ENCODE measurements at regions of chr9 and their contacts with region 1.

Region 1: DNA sequence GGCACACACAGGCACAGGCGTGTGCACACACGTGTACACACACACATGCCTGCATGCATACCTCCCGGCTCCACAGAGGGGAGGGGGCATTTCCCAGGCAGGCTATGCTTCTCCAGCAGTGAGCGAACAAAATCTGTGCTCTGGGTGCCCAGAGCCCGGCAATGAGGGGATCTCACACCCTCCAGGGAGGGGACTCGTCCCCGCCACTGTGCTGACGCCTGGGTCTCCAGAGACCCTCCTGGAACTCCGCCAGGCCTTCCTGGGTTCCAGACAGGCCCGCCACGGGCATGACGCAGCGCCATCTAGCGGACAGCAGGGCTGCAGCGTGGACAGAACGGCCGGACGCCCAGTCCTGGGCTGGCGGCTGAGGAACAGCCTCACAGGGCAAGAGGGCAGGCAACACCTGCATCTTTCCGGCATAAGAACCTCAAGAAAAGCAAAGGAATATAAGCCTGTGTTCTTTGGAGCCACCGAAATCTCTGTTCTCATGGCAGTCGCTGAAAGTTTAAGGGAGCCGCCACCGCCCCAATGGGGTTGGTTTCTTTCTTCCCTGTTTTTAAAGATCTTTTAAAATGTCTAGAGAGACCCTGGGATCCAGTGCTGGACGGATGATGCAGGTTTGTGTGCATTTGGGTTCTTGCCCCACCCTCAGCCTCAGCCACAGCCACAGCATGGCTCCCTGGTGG is 135.6 kb upstream of the PPP1R26 start:
- DNase-seq: peak; percentile 73 to 78 (median 76)
- ATAC-seq: peak; percentile 66 to 85 (median 78)
- H3K4me3 ChIP-seq: no peak overlapping the region
- H3K27ac ChIP-seq: no peak overlapping the region
- H3K4me1 ChIP-seq: no peaks in the 10 kb centered on the region
- H3K27me3 ChIP-seq: peaks cover 0 to 7% of the 10 kb centered on the region in 2 donors
- CTCF ChIP-seq: peak; percentile 81 to 95 (median 90)
- POLR2A ChIP-seq: no peak

Region 2: DNA sequence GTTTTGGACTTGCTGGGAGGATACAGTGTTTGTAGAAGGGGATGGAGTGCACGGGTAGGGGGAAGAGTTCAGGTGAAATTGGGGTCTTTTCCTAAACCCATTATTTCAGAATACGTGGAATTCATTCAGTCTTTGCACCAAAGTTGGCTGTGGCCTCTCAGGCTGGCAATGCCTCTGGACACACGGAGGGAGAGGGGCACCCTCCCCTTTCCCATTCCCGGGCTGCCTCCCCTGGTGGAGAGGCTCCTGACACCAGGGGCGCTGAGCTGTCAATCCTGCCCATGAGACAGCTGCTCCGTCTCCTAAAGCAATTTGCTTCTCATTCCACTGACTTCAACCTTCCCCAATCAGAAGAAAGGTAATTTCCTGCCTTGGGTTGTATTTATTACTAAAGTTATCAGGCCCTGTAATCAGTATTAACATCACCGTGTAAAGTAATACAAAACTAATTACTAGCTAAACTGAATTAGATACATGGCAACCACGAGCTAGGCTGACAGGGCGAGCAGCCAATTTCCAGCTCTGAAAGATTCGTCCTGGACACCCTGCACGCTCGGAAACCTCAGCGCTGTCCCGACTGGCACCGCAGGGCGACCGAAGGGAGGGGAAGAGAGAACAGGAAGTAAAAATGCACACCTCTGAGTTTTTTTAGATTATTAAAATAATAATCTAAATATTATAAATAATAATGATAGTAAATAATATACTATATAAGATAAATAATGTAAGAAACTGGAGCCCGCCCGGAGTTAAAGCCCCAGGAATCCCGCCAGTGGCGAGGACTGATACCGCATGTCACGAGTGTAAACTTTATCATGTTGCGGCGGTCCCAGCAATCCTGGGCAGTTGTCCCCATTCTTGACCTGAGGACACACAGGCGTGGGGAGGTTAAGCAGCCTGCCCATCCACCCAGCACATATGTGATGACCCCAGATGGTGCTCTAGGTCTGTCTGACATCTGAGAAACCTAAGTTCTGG is 263.4 kb before region 1 on chr9:
- intact Hi-C with region 1: loop called (anchors 5 kb)
- DNase-seq: peak in 1 of 3 donors; percentile 41
- ATAC-seq: no peak
- H3K4me3 ChIP-seq: no peak overlapping the region
- H3K27ac ChIP-seq: no peak overlapping the region
- H3K4me1 ChIP-seq: peaks cover 0 to under 1% (median 0%) of the 10 kb centered on the region in 4 donors
- H3K27me3 ChIP-seq: no peaks in the 10 kb centered on the region
- CTCF ChIP-seq: no peak
- POLR2A ChIP-seq: no peak

Region 3: DNA sequence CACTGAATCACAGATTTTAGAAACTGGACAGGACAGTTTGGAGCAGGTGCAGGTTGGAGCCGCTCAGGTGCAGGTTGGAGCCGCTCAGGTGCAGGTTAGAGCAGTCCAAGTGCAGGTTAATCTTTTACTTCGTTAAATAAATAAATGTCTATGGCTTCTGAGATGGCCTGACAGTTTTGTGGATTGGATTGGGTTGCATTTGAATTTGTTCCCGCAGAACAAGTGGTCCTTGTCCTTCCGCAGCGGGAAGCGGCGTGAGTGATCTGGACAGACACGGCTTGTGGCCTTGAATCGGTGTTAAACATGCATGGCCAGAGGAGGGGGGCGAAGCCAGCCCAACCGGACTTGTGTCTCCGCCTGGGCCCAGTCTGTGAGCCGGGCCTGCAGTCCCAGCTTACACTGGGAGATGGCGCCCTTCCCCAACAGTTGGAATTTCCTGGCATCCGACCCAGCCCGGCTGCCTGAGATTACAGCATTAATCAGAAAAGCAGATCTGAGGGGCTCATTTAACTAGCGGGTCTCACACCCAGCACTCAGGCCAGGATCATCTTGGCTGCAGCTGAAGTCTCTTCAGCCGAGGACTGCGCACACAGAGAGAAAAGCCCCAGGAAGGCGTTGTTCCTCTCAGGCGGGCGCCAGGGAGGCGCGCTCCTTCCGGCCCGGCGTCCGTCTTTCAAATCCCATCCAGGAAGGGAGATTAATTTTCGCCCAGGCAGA is 258.0 kb before region 1 on chr9:
- intact Hi-C with region 1: loop called (anchors 5 kb)
- DNase-seq: peak; percentile 74 to 79 (median 76)
- ATAC-seq: peak; percentile 86 to 88 (median 88)
- H3K4me3 ChIP-seq: peak overlapping the region in 1 of 3 donors; percentile 12
- H3K27ac ChIP-seq: no peak overlapping the region
- H3K4me1 ChIP-seq: peaks cover 0 to 8% (median 0%) of the 10 kb centered on the region in 4 donors
- H3K27me3 ChIP-seq: peaks cover 0 to 22% of the 10 kb centered on the region in 2 donors
- CTCF ChIP-seq: peak; percentile 90 to 94 (median 92)
- POLR2A ChIP-seq: no peak

Region 4: GRCh38 chr9:135395328-135395725 is 51.3 kb after region 1 on chr9:
- intact Hi-C with region 1: no loop called
- DNase-seq: no peak
- ATAC-seq: no peak
- H3K4me3 ChIP-seq: no peak overlapping the region
- H3K27ac ChIP-seq: no peak overlapping the region
- H3K4me1 ChIP-seq: no peaks in the 10 kb centered on the region
- H3K27me3 ChIP-seq: no peaks in the 10 kb centered on the region
- CTCF ChIP-seq: no peak
- POLR2A ChIP-seq: no peak